Activated CD4-positive, alpha-beta T cell treated with anti-CD3 and anti-CD28 coated beads, Interleukin-2, amount 10 ng/mL, durations not matched to agents 7 days and 5 days (primary cell): ENCODE measurements at regions of chr5 and their contacts with region 1.

Region 1: GRCh38 chr5:55836191-55836590 is 15.0 kb upstream of the IL31RA start:
- DNase-seq: no peak
- H3K4me3 Mint-ChIP-seq: no peak overlapping the region
- H3K27ac Mint-ChIP-seq: no peak overlapping the region
- H3K4me1 Mint-ChIP-seq: no peaks in the 10 kb centered on the region
- H3K27me3 Mint-ChIP-seq: peaks cover 5% of the 10 kb centered on the region

Region 2: DNA sequence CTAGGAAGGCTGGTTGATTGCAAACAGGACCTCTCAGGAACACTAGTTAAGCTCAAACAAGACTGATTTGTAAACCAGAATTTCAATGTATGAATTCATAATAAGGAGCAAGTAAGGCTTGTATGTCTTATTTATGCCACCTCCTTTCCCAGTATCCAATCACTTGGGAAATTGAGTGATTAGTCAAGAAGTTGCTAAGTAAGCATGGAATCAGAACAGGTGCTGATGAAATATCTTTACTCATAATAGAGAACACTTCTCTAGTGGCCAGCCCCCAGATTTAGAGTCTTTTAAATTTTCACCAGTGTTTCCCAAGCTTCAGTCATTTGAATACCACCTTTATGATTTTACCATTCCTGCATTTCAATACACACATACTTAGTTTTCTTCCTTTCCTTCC is 103.6 kb before region 1 on chr5:
- CTCF ChIA-PET with region 1: no interaction called
- POLR2A ChIA-PET with region 1: no interaction called
- DNase-seq: no peak
- H3K4me3 Mint-ChIP-seq: no peak overlapping the region
- H3K27ac Mint-ChIP-seq: no peak overlapping the region
- H3K4me1 Mint-ChIP-seq: no peaks in the 10 kb centered on the region
- H3K27me3 Mint-ChIP-seq: peaks cover 12% of the 10 kb centered on the region

Region 3: GRCh38 chr5:55742778-55743177 is 93.4 kb before region 1 on chr5:
- CTCF ChIA-PET with region 1: no interaction called
- POLR2A ChIA-PET with region 1: no interaction called
- DNase-seq: no peak
- H3K4me3 Mint-ChIP-seq: no peak overlapping the region
- H3K27ac Mint-ChIP-seq: no peak overlapping the region
- H3K4me1 Mint-ChIP-seq: no peaks in the 10 kb centered on the region
- H3K27me3 Mint-ChIP-seq: peaks cover 2% of the 10 kb centered on the region

Region 4: GRCh38 chr5:55821731-55822512 is 14.3 kb before region 1 on chr5:
- CTCF ChIA-PET with region 1: interaction called, 10 read pairs
- POLR2A ChIA-PET with region 1: no interaction called
- DNase-seq: no peak
- H3K4me3 Mint-ChIP-seq: peak overlapping the region; percentile 38
- H3K27ac Mint-ChIP-seq: no peak overlapping the region
- H3K4me1 Mint-ChIP-seq: peaks cover 10% of the 10 kb centered on the region
- H3K27me3 Mint-ChIP-seq: peaks cover 58% of the 10 kb centered on the region